A673 (cell line): ENCODE measurements at regions of chr11 and their contacts with region 1.

Region 1: DNA sequence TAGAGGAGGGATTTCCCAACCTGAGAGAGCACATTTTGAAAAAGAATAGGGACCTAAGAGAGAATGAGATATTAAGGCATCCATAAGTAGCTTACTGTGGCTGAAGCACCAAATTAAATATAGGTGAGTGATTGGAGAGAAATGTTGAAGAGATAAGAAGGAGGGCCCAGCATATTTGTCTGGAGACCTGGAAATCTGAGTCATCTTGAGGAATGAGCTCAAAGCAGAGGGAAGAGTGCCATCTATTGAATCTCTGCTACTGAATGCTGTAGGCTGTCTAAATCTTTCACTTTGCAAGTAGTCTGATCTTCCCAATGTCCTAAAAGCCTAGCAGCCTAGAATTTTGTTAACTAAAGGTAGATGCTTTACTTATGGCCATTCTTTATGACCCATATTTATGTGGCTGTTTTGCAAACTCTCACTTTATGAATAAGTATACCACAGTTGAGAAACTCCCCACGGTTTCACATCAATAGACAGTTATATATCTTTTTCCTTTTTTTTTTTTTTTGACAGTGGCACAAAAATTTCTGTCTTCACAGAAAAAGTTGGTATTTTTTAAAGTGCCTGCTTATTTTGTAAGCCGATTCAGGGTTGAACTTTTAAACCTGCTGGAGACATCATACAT is 2093.5 kb downstream of the LRRC4C start:
- DNase-seq: peak; percentile 96
- H3K4me3 ChIP-seq: no peak overlapping the region
- H3K27ac ChIP-seq: peak overlapping the region; percentile 56
- H3K4me1 ChIP-seq: peaks cover 32% of the 10 kb centered on the region
- H3K27me3 ChIP-seq: no peaks in the 10 kb centered on the region
- CTCF ChIP-seq: peak; percentile 99

Region 2: GRCh38 chr11:37449146-37449545 is 1916.8 kb before region 1 on chr11:
- CTCF ChIA-PET with region 1: no interaction called
- POLR2A ChIA-PET with region 1: no interaction called
- intact Hi-C with region 1: loop called (anchors 5 kb)
- DNase-seq: peak; percentile 94
- H3K4me3 ChIP-seq: no peak overlapping the region
- H3K27ac ChIP-seq: no peak overlapping the region
- H3K4me1 ChIP-seq: peaks cover 50% of the 10 kb centered on the region
- H3K27me3 ChIP-seq: no peaks in the 10 kb centered on the region
- CTCF ChIP-seq: peak; percentile 92

Region 3: DNA sequence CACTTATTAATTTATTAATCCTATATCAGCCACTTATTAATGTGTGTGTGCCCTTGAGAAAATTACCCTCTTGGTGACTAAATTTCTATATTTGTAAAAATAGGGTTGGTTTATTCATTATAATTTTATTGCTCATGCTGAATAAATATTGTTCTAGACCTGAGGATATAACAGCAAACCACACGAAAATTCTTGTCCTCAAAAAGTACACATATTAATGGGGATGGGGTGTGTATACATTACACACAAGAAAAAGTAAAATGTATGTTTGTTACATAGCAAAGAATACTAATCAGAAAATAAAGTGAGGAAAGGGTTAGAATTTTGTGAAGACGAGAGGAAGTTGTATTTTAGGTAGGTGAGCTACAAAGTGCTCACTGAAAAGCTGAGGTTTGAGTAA is 1699.0 kb before region 1 on chr11:
- CTCF ChIA-PET with region 1: no interaction called
- POLR2A ChIA-PET with region 1: no interaction called
- intact Hi-C with region 1: loop called (anchors 5 kb)
- DNase-seq: no peak
- H3K4me3 ChIP-seq: no peak overlapping the region
- H3K27ac ChIP-seq: no peak overlapping the region
- H3K4me1 ChIP-seq: no peaks in the 10 kb centered on the region
- H3K27me3 ChIP-seq: no peaks in the 10 kb centered on the region
- CTCF ChIP-seq: no peak

Region 4: DNA sequence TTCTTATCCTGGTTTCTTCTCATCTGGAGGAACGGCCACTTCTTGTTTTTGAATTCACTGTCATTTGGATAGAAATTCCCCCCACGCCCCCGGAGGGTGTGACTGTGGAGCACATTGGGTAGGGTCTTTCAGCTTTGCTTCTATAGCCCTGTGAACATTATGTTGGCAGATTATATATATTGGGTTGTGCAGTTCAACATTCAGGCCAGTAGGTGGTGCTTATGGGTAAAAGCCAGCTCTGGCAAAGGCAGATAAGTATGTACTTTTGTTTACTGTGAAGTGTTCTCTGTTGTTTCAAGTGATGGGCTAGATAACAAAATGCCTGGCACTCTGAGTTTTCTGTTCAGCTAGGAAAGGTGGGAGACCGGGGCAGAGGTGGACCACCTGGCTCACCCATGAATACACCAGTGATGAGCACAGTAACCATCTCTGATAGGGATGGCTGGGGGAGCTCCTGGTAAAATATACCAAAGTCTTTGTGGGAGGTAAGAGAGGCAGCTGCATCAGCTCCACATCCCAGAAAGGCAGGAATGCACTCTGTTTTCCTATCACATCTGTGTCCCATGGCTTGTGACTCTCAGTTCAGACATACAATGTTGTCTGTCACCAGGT is 1419.7 kb before region 1 on chr11:
- CTCF ChIA-PET with region 1: no interaction called
- POLR2A ChIA-PET with region 1: no interaction called
- intact Hi-C with region 1: loop called (anchors 2 kb)
- DNase-seq: peak; percentile 86
- H3K4me3 ChIP-seq: no peak overlapping the region
- H3K27ac ChIP-seq: no peak overlapping the region
- H3K4me1 ChIP-seq: no peaks in the 10 kb centered on the region
- H3K27me3 ChIP-seq: no peaks in the 10 kb centered on the region
- CTCF ChIP-seq: peak; percentile 96

Region 5: GRCh38 chr11:38191101-38191500 is 1174.8 kb before region 1 on chr11:
- CTCF ChIA-PET with region 1: no interaction called
- POLR2A ChIA-PET with region 1: no interaction called
- intact Hi-C with region 1: loop called (anchors 2 kb)
- DNase-seq: peak; percentile 56
- H3K4me3 ChIP-seq: no peak overlapping the region
- H3K27ac ChIP-seq: no peak overlapping the region
- H3K4me1 ChIP-seq: peaks cover 4% of the 10 kb centered on the region
- H3K27me3 ChIP-seq: no peaks in the 10 kb centered on the region
- CTCF ChIP-seq: peak; percentile 48

Region 6: DNA sequence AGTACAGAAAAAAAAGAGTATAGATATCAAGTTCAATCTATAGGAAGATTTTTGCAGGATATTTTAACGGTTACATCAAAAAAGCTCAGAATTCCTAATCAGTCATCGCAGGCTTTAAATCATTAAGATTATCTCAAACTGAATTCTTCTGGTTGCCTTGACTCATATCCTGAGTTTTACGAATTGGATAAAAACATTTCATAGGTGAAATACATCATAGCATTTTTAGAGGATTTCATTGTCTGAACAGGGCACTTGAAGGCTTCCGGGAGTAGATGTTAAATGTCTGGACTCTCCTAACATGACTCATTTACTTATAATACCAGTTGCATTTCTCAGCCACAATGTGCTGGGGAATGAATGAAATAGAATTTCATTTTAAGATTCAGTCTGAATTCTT is 551.3 kb before region 1 on chr11:
- CTCF ChIA-PET with region 1: no interaction called
- POLR2A ChIA-PET with region 1: no interaction called
- intact Hi-C with region 1: no loop called
- DNase-seq: peak; percentile 86
- H3K4me3 ChIP-seq: no peak overlapping the region
- H3K27ac ChIP-seq: no peak overlapping the region
- H3K4me1 ChIP-seq: no peaks in the 10 kb centered on the region
- H3K27me3 ChIP-seq: no peaks in the 10 kb centered on the region
- CTCF ChIP-seq: no peak

Region 7: GRCh38 chr11:39236916-39237315 is 129.0 kb before region 1 on chr11:
- CTCF ChIA-PET with region 1: no interaction called
- POLR2A ChIA-PET with region 1: no interaction called
- intact Hi-C with region 1: no loop called
- DNase-seq: peak; percentile 68
- H3K4me3 ChIP-seq: no peak overlapping the region
- H3K27ac ChIP-seq: no peak overlapping the region
- H3K4me1 ChIP-seq: no peaks in the 10 kb centered on the region
- H3K27me3 ChIP-seq: no peaks in the 10 kb centered on the region
- CTCF ChIP-seq: no peak

Region 8: DNA sequence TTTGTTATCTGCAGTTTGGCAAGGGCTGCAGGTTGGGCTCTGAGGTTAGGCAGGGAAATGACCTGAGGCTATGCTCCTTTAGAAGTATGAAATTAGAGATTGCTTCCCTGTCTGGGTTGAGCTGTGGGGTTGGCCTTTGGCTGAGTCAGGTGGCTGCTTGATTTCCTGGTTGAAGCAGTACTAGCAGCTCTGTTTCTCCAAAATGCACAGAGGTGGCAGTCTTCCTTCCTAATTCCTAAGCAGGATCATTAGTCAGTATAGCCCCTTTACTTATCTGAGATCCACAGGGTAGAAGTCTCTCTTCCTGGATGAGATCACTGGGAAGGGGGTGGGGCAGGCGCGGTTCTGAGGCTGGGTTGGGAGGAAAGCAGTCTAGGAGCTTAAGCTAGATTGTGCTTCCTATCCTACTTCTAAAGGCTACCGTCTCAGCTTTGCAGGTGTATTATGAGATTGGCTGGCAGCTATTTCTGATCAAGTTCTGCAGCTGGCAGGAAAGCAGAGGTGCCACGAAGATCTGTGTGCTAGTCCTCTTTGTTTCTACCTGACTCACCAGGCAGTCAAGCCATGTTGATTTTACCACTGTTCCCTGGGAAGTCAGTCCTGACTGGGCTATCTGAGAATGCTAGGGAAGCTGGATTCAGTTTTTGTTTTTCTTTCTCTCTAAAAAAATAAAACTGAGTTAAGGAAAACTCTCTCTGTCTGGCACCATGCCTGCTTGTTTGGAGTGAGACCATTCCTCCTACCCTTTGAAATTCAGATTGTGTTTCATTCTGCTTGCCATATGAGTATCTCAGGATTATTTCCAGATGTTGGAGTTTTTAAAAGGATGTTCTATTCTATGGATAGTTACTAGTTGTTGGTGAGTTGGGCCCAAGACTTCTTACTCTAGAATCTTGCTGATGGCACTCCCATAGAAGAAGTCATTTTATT is 176.3 kb after region 1 on chr11:
- CTCF ChIA-PET with region 1: no interaction called
- POLR2A ChIA-PET with region 1: no interaction called
- intact Hi-C with region 1: no loop called
- DNase-seq: peak; percentile 28
- H3K4me3 ChIP-seq: no peak overlapping the region
- H3K27ac ChIP-seq: no peak overlapping the region
- H3K4me1 ChIP-seq: no peaks in the 10 kb centered on the region
- H3K27me3 ChIP-seq: no peaks in the 10 kb centered on the region
- CTCF ChIP-seq: no peak